Dorsolateral prefrontal cortex (tissue), 120 donors: ENCODE measurements at regions of chr6 and their contacts with region 1.

Region 1: DNA sequence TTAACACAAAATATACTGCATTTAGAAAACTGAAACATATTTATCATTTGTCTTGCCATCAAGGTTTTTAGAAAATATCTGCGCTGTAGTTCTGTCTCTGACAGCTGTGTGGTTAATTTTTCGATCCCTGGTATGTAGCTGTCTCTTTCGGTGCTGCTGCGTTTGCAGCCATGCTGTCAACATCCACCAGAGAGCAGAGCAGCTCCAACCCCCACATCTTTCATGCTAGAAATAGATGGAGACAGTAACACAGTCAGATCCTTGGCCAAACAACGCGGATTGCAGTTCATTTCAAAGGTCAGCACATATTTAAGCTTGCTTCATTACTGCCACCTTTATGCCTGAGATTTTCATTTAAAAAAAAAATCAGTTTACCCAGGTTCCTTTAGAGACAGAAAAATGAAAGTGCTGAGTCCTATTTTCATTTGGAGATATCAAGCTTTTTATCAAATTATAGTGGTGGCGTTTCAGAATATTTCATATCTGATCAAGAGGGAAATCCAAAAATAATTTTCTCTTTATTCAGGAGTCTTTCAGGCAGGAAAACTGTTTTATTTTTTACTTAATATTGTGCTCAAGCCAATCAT is 157.7 kb upstream of the MMS22L start:
- DNase-seq: peak; percentile 17 to 91 (median 81)
- H3K4me3 ChIP-seq: peak overlapping the region; percentile 8 to 67 (median 49)
- H3K27ac ChIP-seq: peak overlapping the region; percentile 35 to 95 (median 87)
- H3K27me3 ChIP-seq: no peaks in the 10 kb centered on the region
- CTCF ChIP-seq: peak; percentile 28 to 88 (median 72)

Region 2: DNA sequence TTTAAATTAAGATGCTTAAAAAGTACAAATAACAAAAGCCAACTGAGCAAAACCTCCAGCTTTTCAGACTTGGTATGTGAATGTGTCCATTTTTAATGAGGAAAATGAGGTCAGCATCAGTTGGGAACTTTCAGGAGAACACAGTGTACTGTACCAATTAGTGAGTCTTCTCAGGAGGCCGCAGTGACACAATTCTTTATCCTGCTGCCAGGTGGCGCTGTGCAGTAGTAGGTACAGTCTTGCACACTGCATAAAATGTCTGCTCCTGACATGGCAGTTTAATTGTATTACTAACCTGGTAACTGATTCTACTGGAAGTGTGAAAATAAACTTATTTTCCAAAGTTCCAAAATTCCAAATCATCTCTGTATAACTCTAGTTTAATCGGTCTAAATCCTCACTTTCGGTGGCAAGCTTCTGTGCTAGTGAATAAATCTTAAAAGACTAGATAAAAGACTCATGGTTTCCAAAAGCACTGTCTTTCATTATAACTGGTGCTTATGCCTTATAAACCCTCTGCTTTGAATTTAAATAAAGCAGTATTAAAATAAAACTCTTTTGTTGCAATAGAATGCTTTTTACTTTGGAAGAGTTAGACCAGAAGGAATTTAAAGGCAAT is 57.1 kb after region 1 on chr6:
- intact Hi-C with region 1: loop called in 1 of 2 experiments (anchors 5 kb)
- DNase-seq: peak; percentile 48 to 91 (median 81)
- H3K4me3 ChIP-seq: peak overlapping the region in 3 of 59 donors; percentile 9 to 27 (median 15)
- H3K27ac ChIP-seq: peak overlapping the region in 46 of 59 donors; percentile 5 to 79 (median 48)
- H3K27me3 ChIP-seq: no peaks in the 10 kb centered on the region
- CTCF ChIP-seq: peak; percentile 64 to 96 (median 84)

Region 3: DNA sequence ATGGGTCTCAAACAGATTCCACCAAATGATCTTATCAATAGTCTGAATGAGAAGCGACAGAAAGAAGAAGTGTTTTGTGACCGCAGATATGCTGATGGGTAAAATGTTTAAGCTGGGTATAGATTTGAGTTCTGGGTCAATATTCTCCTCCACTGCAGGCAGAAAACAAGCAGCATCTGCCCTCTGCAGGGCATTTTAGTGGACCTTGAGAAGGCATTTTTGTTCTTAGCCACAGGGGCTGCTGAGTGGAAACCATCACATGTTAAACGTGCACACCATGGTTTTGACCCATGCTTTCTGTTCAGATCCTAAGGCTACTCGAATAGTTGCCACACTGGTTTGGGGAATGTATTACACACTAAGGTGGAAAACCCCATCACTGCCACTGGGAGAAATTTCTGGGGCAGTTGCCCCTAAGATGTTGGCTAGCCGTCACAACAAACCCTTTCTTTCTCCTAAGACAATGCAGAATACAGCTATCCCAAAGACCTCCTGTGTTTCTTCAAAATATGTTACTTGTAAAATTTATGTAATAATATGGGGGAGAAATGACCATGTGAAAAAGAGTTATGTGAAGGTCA is 1399.2 kb after region 1 on chr6:
- intact Hi-C with region 1: loop called (anchors 5 kb)
- DNase-seq: peak in 7 of 10 donors; percentile 38 to 69 (median 56)
- H3K4me3 ChIP-seq: peak overlapping the region in 58 of 59 donors; percentile 27 to 92 (median 78)
- H3K27ac ChIP-seq: peak overlapping the region; percentile 24 to 99 (median 96)
- H3K27me3 ChIP-seq: peaks cover 0 to 61% (median 5%) of the 10 kb centered on the region in 45 donors
- CTCF ChIP-seq: peak; percentile 22 to 84 (median 67)